ENCODE measurements at regions of chr2 and their contacts with region 1.

Region 1: DNA sequence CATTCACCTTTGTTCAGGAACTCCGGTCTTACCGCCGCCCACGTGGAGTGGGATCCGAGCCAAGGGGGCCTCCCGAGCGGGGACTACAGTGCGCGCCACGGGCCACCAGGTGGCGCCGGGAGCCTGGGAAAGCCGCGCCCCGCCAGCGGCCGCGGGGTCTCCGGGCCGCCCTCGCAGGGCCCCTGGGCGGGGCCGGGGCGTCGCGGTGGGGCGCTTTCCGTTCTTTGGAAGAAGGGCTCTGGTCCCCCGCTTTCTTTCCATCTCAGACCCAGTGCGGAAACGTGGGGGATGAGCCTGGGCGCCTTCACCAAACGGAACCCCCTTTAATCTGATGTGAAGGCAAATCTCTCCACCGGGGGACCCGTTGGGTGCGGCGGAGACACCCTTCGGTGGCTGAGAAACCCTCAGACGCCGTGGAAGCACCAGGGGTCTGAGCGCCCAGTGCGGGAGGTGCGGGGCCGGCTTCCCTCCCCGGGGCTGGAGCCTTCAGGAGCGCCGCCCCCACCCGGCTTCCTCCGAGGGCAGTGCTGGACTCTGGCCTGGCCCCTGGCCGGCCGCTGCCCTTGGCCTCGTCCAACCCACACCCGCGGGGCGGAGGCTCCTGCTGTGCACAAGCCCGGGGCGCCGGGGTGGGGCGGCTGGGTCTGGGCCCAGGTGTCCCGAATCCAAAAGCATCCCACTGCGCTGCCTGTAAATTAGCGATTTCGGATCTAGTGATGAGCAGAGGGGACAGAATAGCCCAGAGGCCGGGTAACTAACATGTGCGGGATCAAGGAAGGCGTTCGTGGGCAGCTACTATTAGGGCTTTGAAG is 44.6 kb downstream of the GORASP2 start:
- DNase-seq: peak; percentile 98
- CTCF ChIP-seq: peak; percentile 91

Region 2: GRCh38 chr2:171574149-171574795 is 600.6 kb after region 1 on chr2:
- in situ Hi-C with region 1: loop called (anchors 25 kb)
- DNase-seq: peak; percentile 86
- CTCF ChIP-seq: peak; percentile 73

Region 3: DNA sequence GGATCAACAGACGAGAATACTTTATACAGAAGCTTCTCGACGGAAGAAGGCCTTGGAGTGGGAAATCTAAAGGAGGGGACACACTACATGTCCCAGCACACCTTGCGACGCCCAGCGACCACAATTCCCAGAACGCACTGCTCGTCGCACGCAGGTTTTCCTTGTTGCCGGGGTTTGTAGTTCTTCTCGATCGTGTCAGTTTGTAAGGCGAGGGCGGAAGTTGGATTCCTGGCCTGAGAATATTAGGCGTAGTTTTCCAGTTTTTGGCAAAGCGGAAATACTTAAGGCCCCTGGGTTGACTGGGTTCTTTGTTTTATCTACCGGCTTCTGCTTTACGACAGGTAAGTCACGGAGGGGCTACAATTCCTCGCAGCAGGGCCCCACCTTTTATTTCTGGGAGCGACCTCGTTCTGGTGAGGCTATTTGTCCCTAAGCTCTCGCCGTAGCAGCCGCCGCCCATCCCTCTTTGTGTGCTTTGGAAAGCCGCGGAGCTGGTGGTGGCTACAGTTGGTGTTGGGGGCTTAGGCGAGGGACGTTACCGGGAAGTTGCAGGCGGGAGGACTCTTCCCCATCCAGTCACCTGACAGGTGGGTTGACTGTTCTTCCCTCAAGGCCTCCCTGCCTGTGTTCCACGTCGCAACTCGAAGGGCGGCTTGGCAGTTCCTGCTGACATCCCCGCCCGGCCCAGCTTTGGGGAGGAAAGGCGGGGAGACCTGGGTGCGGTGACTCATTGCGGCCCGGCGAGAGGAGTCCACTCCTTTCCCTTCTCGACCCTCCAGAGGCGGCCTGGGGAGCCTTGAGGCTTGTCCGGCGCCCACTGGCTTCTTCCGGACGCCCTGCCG is 713.8 kb after region 1 on chr2 and contains the start of gene DYNC1I2:
- in situ Hi-C with region 1: loop called (anchors 25 kb)
- DNase-seq: peak; percentile 81
- CTCF ChIP-seq: no peak

Measured in GM13976 (cell line).